WTC11 (cell line): ENCODE measurements at regions of chr2 and their contacts with region 1.

Region 1: GRCh38 chr2:12560618-12561017 is 156.1 kb upstream of the TRIB2 start:
- DNase-seq: no peak
- ATAC-seq: no peak
- H3K4me3 Mint-ChIP-seq: no peak overlapping the region
- H3K27ac Mint-ChIP-seq: no peak overlapping the region
- H3K4me1 Mint-ChIP-seq: peaks cover 9% of the 10 kb centered on the region
- H3K27me3 Mint-ChIP-seq: no peaks in the 10 kb centered on the region
- CTCF ChIP-seq: no peak

Region 2: DNA sequence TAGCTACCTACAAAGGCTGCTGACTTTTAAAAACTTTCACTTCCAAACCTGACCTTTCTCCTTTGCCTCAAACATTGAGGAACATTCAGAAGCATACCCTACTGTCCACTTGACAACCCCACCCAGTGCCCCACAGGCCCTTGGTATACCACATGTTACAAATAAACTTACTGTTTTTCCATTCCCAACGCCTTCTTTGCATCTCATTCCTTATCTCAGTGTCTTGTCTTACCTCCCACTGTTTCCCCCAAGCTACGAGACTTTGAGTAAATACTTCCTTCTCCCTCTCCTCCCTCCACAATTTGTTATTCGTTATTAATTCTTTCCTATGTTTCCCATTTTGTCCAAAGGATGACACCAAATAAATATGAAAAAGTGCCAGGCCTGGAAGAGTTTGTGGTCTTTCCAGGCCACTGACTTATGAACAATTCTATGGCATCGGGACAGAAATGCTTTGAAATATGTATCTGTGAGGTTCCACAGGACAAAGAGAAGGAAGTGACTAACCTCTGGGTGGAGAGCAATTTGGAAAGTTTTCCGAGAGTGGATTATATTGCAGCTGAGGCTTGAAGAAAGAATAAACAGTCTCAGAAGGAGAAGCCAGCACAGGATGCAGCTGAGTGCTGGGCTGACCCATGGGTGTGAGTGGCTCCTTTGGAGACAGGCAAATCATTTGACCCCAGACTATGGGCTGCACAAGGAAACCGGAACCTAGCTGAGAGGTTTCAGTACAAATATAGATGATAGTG is 405.1 kb before region 1 on chr2:
- CTCF ChIA-PET with region 1: no interaction called
- POLR2A ChIA-PET with region 1: no interaction called
- DNase-seq: no peak
- ATAC-seq: no peak
- H3K4me3 Mint-ChIP-seq: no peak overlapping the region
- H3K27ac Mint-ChIP-seq: no peak overlapping the region
- H3K4me1 Mint-ChIP-seq: peaks cover 34% of the 10 kb centered on the region
- H3K27me3 Mint-ChIP-seq: peaks cover 10% of the 10 kb centered on the region
- CTCF ChIP-seq: no peak

Region 3: DNA sequence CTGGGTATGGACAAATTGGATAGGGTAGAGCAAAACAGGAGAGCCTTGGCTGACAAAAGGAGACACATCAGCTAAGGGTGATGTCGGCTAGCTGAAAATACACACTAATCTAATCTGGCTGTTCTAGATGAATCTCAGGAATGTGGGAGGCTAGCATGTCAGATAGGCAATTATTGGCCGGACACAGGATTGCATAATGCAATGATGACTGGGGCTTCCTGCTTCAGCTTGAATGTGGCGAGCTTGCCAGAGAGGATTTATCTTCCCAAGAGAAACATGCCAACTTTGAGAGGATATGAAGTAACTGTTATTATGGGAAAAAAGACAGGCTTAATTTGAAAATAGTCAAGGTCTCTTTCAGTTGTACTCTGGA is 258.5 kb after region 1 on chr2:
- CTCF ChIA-PET with region 1: no interaction called
- POLR2A ChIA-PET with region 1: interaction called, 10 read pairs
- DNase-seq: no peak
- ATAC-seq: no peak
- H3K4me3 Mint-ChIP-seq: no peak overlapping the region
- H3K27ac Mint-ChIP-seq: no peak overlapping the region
- H3K4me1 Mint-ChIP-seq: peaks cover 12% of the 10 kb centered on the region
- H3K27me3 Mint-ChIP-seq: no peaks in the 10 kb centered on the region
- CTCF ChIP-seq: no peak